PC-3 (cell line): ENCODE measurements at regions of chr1 and their contacts with region 1.

Region 1: DNA sequence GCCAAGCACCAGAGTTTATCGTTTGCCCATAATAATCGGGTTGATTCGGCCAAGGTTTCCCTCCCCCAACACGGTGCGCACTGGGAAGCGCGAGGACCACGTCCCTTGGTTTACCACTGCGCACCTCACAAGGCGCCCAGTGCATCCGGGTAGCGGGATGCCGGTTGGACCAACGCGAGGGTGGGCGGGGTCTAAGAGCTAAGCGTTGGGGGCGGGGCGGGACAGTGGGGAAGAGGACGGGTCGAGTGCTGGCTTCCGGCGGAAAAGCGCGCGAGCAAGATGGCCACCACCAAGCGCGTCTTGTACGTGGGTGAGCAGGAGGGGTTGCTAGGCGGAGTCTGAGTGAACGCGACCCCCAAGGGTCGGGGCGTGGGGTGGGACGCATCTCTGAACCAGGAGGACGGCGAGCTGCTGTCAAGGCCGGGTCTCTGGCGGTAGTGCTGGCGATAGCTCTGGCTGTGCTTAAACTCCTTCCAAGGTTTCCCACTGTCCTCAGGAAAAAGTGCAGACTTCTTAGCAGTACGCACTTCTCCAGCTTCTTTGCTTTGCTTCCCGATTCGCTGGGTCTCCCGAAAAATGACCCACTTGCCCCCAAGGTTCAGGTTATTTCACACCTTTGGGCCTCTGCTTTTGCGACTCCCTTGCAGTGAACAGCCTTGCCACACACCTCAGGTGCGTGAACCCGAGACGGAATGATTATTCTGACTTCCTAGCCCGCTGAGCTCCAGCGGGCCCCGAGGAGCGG is at the start of gene PPIE:
- DNase-seq: peak; percentile 82
- ATAC-seq: peak; percentile 98
- H3K4me3 ChIP-seq: peak within 1 kb of the TSS; percentile 92
- H3K27ac ChIP-seq: no peak within 1 kb of the TSS
- H3K4me1 ChIP-seq: peaks cover 11% of the 10 kb centered on the region
- H3K27me3 ChIP-seq: no peaks in the 10 kb centered on the region
- CTCF ChIP-seq: no peak
- total RNA-seq, gene PPIE: 45.1 and 53.6 TPM in 2 replicates

Region 2: DNA sequence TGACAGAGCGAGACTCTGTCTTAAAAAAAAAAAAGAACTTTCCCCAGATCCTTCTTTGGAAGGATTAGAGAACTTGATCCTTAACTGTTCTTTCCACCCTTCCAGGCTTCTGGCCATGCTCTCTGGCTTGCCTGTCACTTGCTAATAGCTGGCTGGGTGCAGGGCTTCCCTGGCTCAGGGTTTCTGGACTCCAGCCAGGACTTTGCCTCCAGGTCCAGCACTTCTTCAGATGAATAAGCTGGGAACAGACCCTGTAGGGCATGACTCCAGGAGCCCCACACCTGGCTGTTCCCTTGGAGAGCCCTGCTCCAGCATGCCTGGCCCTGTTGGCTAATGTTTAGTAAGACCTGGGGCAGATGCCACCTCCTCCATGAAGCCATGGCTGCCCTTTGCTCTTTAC is 63.6 kb before region 1 on chr1:
- CTCF ChIA-PET with region 1: no interaction called
- POLR2A ChIA-PET with region 1: interaction called, 10 read pairs
- intact Hi-C with region 1: no loop called
- DNase-seq: no peak
- ATAC-seq: no peak
- H3K4me3 ChIP-seq: no peak overlapping the region
- H3K27ac ChIP-seq: no peak overlapping the region
- H3K4me1 ChIP-seq: no peaks in the 10 kb centered on the region; the same call in 1 of the 2 replicates
- H3K27me3 ChIP-seq: peaks cover 21% of the 10 kb centered on the region
- CTCF ChIP-seq: no peak

Region 3: DNA sequence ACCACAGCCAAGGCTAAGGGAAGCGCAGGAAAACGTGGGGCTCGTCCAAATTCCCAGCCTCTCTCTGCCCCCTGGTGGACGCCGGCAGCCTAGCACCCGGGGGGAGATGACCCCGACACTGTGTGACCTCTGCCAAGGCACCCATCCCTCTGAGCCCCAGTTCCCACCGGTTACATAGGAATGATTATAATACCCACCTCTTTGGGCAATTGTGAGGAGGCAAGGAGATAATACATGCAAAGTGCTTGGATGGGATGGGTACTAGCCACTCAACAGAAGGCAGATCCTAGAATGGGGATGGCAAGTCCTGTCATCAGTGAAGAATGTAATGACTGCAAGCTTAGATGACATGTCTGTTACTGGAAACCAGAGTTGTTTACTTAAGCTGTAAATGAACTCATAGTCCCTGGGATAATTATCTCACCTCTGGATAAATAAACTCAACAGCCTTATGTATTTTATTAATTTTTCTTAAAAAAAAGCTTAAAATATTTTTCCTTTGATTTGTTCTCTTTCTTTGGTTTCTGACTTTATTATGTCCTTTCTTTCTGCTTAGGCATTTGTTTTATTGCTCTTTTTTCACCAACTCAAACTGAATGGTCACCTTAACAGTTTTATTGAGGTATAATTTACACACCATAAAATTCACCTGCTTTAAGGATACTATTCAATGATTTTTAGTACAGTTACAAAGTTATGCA is 61.1 kb after region 1 on chr1:
- CTCF ChIA-PET with region 1: no interaction called
- POLR2A ChIA-PET with region 1: no interaction called
- intact Hi-C with region 1: loop called (anchors 10 kb)
- DNase-seq: peak; percentile 78
- ATAC-seq: peak; percentile 91
- H3K4me3 ChIP-seq: no peak overlapping the region
- H3K27ac ChIP-seq: peak overlapping the region; percentile 10; the same call in 1 of the 2 replicates
- H3K4me1 ChIP-seq: peaks cover 16% of the 10 kb centered on the region
- H3K27me3 ChIP-seq: no peaks in the 10 kb centered on the region
- CTCF ChIP-seq: peak; percentile 88

Region 4: GRCh38 chr1:39892601-39893595 is 154.1 kb after region 1 on chr1:
- CTCF ChIA-PET with region 1: no interaction called
- POLR2A ChIA-PET with region 1: interaction called, 14 read pairs
- intact Hi-C with region 1: no loop called
- DNase-seq: peak; percentile 84
- ATAC-seq: peak; percentile 89
- H3K4me3 ChIP-seq: peak overlapping the region; percentile 4; the same call in 1 of the 2 replicates
- H3K27ac ChIP-seq: no peak overlapping the region; the same call in 1 of the 2 replicates
- H3K4me1 ChIP-seq: peaks cover 22% of the 10 kb centered on the region
- H3K27me3 ChIP-seq: no peaks in the 10 kb centered on the region
- CTCF ChIP-seq: no peak